ENCODE measurements at regions of chr3 and their contacts with region 1.

Region 1: GRCh38 chr3:194682694-194683310 is 2.9 kb upstream of the FAM43A start:
- DNase-seq: peak; percentile 53
- H3K4me3 ChIP-seq: no peak overlapping the region; the same call in 1 of the 2 replicates
- CTCF ChIP-seq: peak; percentile 79

Region 2: DNA sequence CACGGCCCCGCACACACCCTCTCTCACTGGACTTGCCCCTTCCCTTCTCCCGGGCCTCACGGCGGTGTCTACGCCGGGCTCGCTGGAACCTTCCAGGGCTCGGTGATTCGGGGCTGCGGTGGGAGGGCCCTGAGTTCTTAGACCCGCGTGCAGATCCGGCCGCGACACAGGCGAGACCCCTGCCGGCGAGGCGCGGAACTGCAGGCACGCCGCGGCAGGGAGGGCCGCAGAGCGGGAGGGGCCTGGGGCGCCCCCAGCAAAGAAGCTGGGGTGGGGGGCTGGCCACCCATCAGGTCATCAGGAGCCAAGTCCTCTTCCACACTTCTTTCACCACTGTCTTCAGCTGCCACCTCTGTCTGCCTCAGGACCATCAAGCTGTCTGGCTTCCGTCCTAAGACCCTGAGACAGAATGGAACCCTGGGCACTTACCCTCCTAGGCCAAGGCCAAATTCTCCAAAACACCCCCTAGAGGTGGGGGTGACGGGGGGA is 423.7 kb after region 1 on chr3:
- CTCF ChIA-PET with region 1: interaction called, 171 read pairs
- POLR2A ChIA-PET with region 1: interaction called, 12 read pairs
- DNase-seq: no peak
- H3K4me3 ChIP-seq: peak overlapping the region; percentile 33
- CTCF ChIP-seq: peak; percentile 99

Region 3: GRCh38 chr3:195154793-195155535 is 472.2 kb after region 1 on chr3:
- CTCF ChIA-PET with region 1: interaction called, 16 read pairs
- POLR2A ChIA-PET with region 1: interaction called, 3 read pairs
- DNase-seq: peak; percentile 66
- H3K4me3 ChIP-seq: no peak overlapping the region
- CTCF ChIP-seq: no peak

Region 4: GRCh38 chr3:195245531-195245951 is 562.7 kb after region 1 on chr3:
- CTCF ChIA-PET with region 1: interaction called, 17 read pairs
- POLR2A ChIA-PET with region 1: no interaction called
- DNase-seq: no peak
- H3K4me3 ChIP-seq: no peak overlapping the region
- CTCF ChIP-seq: no peak

Region 5: DNA sequence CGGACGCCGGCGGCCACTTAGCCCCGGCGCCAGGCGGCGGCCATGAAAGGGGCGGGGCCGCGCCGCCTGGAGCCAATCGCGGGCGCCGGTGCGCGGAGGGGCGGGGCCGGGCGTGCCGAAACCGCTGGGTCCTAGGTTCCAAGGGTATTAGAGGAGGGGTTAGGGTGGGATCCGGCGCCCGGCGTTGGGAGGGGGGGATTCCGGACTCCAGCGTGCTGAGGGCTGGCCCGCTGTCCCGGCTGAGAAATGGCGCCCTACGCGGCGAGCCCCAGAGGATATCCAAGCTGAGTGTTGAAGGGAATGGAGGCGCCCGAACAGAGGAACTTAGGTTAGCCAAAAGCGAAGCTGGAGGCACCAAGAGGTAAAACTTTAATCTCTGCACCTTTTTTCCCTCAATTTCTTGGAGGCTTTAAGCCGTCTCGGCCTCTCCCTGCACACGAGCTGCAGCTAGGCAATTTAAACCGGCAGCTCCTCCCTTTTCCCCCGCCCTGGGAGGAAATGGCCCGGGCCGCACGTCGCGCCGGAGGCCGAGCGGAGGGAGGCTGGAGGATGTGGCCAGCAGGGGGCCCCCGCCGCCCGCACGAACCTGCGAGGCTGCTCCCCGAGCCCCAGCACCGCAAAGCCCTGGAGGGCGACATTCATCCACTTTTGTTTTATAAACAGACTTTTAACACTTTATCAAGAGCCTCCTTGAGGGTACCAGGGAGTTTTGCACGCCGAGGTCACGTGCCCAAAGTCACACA is 588.5 kb after region 1 on chr3 and contains the start of gene XXYLT1:
- CTCF ChIA-PET with region 1: interaction called, 288 read pairs
- POLR2A ChIA-PET with region 1: interaction called, 29 read pairs
- DNase-seq: no peak
- H3K4me3 ChIP-seq: peak within 1 kb of the TSS; percentile 73
- CTCF ChIP-seq: peak; percentile 99